ENCODE measurements at regions of chr12 and their contacts with region 1.

Region 1: GRCh38 chr12:47779301-47779942 is 6.4 kb downstream of the SLC48A1 start:
- DNase-seq: peak; percentile 88 to 99 (median 94)

Region 2: DNA sequence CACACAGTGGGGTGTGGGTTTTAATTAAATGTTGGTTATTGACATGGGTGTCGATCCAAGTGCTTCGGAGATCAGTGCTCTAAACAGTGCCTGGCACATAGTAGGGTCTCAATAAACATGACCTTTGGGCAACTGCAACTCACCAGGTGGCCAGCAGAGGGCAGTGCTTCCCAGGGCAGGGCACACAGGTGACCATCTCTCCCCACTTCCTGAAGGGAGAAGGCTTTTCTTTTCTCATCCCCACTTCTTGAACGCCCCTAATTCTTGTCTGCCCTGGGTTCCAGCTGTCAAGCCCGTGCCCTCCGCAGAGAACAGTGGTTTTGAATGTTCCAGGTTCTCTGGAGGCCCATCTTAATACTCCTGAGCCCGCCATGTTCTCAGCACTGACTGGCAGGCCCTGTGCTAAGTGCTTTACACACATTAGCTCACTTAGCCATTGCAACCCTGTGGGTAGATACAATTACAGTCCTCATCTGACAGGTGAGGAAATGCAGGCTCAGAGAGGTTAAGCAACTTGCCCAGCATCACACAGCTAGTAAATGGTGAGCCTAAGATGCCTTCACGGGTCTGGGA is 37.1 kb before region 1 on chr12:
- intact Hi-C with region 1: loop called (anchors 2 kb)
- DNase-seq: peak in 4 of 10 donors; percentile 45 to 92 (median 57)

Measured in posterior cingulate gyrus (tissue), 11 donors.